GM10248 (cell line): ENCODE measurements at regions of chr14 and their contacts with region 1.

Region 1: DNA sequence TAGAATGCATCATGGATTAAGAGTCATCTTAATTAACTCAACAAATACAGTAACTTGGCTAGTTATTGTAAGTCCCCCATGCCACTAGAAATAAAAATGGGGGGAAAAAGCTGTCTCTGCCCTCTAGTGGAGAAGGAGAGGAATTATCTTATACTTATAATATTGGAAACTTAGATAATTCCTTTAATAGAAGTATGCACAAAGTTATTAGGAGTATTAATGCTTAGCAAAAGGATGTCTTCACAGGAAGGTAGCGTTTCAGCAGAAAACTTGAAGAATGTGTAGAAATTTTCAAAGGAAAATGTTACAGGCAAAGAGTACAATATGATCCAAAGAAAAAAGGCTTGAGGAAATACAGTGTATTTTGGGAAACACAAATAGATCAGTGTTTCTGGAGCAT is 19.8 kb downstream of the OR5AU1 start:
- DNase-seq: peak; percentile 57
- CTCF ChIP-seq: peak; percentile 30

Region 2: GRCh38 chr14:20905676-20906075 is 230.3 kb before region 1 on chr14:
- CTCF ChIA-PET with region 1: no interaction called
- POLR2A ChIA-PET with region 1: no interaction called
- DNase-seq: no peak
- CTCF ChIP-seq: no peak

Region 3: DNA sequence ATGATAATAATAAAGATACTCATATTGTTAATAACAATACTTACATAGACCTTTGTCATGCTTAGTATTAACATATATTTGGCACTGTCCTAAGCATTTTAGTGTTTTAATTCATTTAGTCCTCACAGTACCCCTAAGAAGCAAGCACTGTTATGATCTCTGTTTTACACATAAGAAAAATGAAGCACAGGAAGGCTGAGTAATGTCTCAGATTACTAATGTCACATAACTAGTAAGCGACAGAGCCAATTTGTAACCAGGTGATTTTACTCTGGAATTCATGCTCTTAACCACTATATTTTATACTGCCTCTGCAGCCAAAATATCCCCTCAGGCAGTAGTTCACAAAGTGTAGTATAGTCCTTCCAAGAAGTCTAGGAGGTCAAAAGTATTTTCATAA is 14.9 kb before region 1 on chr14:
- CTCF ChIA-PET with region 1: interaction called, 26 read pairs
- POLR2A ChIA-PET with region 1: no interaction called
- DNase-seq: no peak
- CTCF ChIP-seq: no peak

Region 4: DNA sequence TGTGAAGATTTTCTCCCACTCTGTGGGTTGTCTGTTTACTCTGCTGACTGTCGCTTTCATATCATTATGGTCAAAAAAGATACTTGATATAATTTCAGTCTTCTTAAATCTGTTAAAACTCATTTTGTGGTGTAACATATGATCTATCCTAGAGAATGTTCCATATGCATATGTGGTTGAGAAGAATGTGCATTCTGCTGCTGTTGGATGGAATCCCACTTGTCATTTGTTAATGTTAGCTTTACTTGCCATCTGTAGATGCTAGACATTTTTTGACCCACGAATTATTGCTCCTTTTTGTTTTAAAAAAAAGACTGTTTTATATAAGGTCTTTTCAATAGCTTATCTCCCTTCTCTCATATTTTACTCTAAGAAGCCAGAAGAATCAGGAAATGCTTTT is 46.1 kb after region 1 on chr14:
- CTCF ChIA-PET with region 1: no interaction called
- POLR2A ChIA-PET with region 1: no interaction called
- DNase-seq: no peak
- CTCF ChIP-seq: no peak

Region 5: DNA sequence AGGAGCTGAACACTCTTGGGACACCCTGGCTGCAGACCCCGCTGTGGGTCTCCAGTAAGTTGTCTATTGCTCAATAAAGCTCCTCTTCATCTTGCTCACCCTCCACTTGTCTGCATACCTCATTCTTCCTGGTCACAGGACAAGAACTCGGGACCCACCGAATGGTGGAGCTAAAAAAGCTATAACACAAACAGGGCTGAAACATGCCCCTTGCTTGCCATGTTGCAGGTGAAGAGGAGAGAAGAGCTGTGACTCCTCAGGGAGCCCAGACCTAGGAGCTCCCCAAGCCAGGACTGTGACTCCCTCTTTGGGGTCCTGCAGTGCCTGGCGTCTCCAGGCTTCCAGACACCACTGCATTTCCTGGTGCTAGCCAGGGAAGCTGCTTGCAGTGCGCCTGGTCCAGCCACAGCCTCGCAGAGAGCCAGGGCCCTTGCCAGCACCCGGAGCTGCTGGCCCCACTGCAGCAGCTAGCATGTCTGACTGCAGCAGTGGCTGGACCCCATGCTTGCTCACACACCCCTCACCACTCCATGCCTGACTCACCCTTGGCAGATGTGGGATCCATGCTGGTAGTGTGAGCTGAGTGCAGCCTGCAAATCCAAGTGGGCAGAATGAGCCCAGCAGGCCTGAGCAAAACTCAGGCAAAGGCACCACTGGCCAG is 57.0 kb after region 1 on chr14:
- CTCF ChIA-PET with region 1: no interaction called
- POLR2A ChIA-PET with region 1: no interaction called
- DNase-seq: no peak
- CTCF ChIP-seq: no peak